ENCODE measurements at regions of chr17 and their contacts with region 1.

Region 1: DNA sequence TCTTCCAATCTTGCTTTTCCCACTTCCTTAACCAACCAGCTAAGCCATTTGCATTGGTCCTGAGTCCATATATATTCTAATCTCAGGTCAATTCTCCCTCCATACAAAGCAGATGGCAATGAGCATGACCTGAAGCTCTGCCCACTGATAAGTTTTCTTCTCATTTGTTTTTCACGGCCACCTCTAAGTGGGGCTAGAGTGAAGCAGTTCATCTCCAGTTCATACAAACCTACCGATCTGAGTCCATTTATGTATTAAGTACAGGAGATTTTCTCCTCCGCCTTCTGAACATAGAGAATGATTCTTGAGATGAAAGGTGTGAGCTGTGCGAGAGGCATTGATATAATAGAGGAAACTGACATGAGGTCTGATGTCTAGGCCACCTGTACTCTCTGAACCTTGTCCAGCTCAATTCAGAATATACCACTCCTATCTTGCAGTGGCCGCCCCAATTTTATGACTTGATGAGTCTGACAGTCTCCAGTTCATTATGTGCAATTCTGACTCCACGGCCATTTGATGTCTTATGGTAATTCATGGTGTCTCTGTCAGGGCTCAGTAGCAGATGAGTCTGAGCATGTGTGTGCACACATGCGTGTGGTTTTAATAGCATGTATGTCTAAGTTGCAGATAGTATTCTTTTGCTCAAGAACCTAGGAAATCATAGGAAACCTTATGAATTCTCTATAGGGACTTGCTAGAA is 329.8 kb downstream of the PMP22 start:
- DNase-seq: no peak
- ATAC-seq: no peak
- H3K4me3 ChIP-seq: no peak overlapping the region
- H3K27ac ChIP-seq: no peak overlapping the region
- H3K4me1 ChIP-seq: no peaks in the 10 kb centered on the region
- H3K27me3 ChIP-seq: peaks cover 23% of the 10 kb centered on the region
- CTCF ChIP-seq: no peak

Region 2: DNA sequence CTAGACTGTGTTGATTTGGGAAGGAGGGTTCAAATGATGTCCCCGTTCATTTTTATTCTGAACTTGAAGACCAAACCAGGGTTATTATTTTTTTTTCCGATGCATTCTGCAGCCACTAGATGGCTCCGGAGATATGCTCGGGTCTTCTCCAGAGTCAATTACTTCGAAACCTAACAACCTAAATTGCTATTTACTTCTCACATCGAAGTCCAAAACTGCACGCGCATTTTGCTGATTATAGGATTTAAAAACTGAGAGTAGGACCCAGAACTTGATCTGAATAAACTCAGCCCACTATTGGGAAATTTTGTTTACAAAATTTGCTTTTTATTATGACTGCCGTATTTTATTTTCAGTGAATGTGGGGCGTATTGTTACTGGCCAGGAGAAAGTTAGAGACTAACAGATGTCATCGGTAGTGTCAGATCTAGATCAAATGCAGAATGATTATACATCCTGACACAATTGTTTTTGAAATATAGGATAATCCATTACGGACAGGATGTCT is 1597.4 kb before region 1 on chr17:
- CTCF ChIA-PET with region 1: no interaction called
- POLR2A ChIA-PET with region 1: no interaction called
- intact Hi-C with region 1: loop called (anchors 10 kb)
- DNase-seq: peak; percentile 79
- ATAC-seq: peak; percentile 33; the same call in 1 of the 2 replicates
- H3K4me3 ChIP-seq: peak overlapping the region; percentile 64
- H3K27ac ChIP-seq: no peak overlapping the region
- H3K4me1 ChIP-seq: 0 out of 2 replicates have a peak, but pooled peaks cover 5% of the 10 kb centered on the region
- H3K27me3 ChIP-seq: peaks cover 30% of the 10 kb centered on the region
- CTCF ChIP-seq: peak; percentile 96

Region 3: DNA sequence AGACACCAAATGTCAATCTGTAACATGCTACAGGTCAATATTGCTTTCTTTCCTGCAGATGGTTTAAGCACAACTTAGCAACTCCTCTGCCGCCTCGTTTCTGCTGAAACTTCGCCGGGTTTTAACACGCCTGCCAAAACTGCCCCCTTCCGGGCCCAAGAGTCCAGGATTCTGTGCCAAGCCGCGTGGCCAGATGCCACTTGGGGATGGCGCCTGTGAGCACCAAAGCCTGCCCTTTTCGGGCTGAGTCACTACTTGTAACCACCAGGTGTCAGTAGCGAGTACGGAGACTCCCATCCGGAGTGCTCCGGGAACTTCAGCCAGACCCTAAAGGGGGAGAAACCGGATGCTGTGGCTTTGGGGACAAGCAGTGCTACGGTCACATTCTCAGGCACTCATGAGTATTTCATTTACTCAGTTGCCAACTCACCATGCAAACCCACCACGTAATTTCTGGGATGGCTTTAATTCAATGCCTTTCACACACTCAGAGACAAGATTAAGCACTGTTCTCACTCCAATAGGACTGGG is 322.0 kb after region 1 on chr17:
- CTCF ChIA-PET with region 1: no interaction called
- POLR2A ChIA-PET with region 1: no interaction called
- intact Hi-C with region 1: no loop called
- DNase-seq: peak; percentile 99
- ATAC-seq: peak; percentile 42
- H3K4me3 ChIP-seq: peak overlapping the region; percentile 90
- H3K27ac ChIP-seq: peak overlapping the region; percentile 83
- H3K4me1 ChIP-seq: peaks cover 40% of the 10 kb centered on the region
- H3K27me3 ChIP-seq: no peaks in the 10 kb centered on the region
- CTCF ChIP-seq: peak; percentile 98

Measured in PC-3 (cell line).